Esophagus muscularis mucosa (tissue), 4 donors: ENCODE measurements at regions of chr12 and their contacts with region 1.

Region 1: GRCh38 chr12:132761032-132761920 is at the start of gene ANKLE2:
- DNase-seq: no peak
- H3K4me3 ChIP-seq: peak within 1 kb of the TSS; percentile 97 to 100 (median 100)
- H3K27ac ChIP-seq: peak within 1 kb of the TSS; percentile 91 to 98 (median 94)
- H3K4me1 ChIP-seq: peaks cover 26 to 39% (median 35%) of the 10 kb centered on the region in 4 donors
- H3K27me3 ChIP-seq: no peaks in the 10 kb centered on the region
- CTCF ChIP-seq: no peak
- EP300 ChIP-seq: no peak
- POLR2A ChIP-seq: no peak
- total RNA-seq, gene ANKLE2: 40.2 to 47.2 (median 45.4) TPM

Region 2: DNA sequence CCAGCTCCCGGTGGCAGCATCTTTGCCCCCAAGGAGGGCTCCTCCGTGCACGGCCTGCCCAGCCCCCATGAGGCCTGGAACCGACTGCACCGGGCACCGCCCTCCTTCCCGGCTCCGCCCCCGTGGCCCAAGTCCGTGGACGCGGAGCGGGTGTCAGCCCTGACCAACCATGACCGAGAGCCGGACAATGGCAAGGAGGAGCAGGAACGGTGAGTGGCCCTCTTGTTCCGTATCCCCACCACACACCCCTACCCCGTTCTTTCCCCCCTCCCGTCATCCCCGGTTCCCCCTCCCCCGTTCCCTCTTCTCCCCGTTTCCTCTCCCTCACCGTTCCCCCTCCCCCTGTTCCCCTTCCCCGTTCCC is 179.2 kb before region 1 on chr12:
- intact Hi-C with region 1: no loop called
- DNase-seq: no peak
- H3K4me3 ChIP-seq: peak overlapping the region; percentile 45 to 54 (median 46)
- H3K27ac ChIP-seq: peak overlapping the region; percentile 56 to 78 (median 69)
- H3K4me1 ChIP-seq: peaks cover 0 to 34% (median 22%) of the 10 kb centered on the region in 4 donors
- H3K27me3 ChIP-seq: no peaks in the 10 kb centered on the region
- CTCF ChIP-seq: no peak
- EP300 ChIP-seq: no peak
- POLR2A ChIP-seq: no peak

Region 3: GRCh38 chr12:132828706-132829534 is 67.6 kb after region 1 on chr12 and contains the start of gene GOLGA3:
- intact Hi-C with region 1: loop called (anchors 5 kb)
- DNase-seq: peak; percentile 98
- H3K4me3 ChIP-seq: peak within 1 kb of the TSS; percentile 75 to 99 (median 83)
- H3K27ac ChIP-seq: peak within 1 kb of the TSS; percentile 94 to 99 (median 94)
- H3K4me1 ChIP-seq: peaks cover 13 to 36% (median 29%) of the 10 kb centered on the region in 4 donors
- H3K27me3 ChIP-seq: no peaks in the 10 kb centered on the region
- CTCF ChIP-seq: peak in 1 of 3 experiments; percentile 22
- EP300 ChIP-seq: no peak
- POLR2A ChIP-seq: peak; percentile 16
- total RNA-seq, gene GOLGA3: 72.3 to 123 (median 93.4) TPM

Region 4: GRCh38 chr12:132887513-132888351 is 126.5 kb after region 1 on chr12 and contains the start of gene CHFR:
- intact Hi-C with region 1: loop called (anchors 10 kb)
- DNase-seq: peak; percentile 98
- H3K4me3 ChIP-seq: peak within 1 kb of the TSS; percentile 76 to 97 (median 92)
- H3K27ac ChIP-seq: peak within 1 kb of the TSS; percentile 89 to 98 (median 94)
- H3K4me1 ChIP-seq: peaks cover 0 to 28% (median 20%) of the 10 kb centered on the region in 4 donors
- H3K27me3 ChIP-seq: no peaks in the 10 kb centered on the region
- CTCF ChIP-seq: no peak
- EP300 ChIP-seq: no peak
- POLR2A ChIP-seq: peak; percentile 11
- total RNA-seq, gene CHFR: 35.7 to 41.7 (median 40.0) TPM